Endothelial cell of umbilical vein (primary cell): ENCODE measurements at regions of chr11 and their contacts with region 1.

Region 1: DNA sequence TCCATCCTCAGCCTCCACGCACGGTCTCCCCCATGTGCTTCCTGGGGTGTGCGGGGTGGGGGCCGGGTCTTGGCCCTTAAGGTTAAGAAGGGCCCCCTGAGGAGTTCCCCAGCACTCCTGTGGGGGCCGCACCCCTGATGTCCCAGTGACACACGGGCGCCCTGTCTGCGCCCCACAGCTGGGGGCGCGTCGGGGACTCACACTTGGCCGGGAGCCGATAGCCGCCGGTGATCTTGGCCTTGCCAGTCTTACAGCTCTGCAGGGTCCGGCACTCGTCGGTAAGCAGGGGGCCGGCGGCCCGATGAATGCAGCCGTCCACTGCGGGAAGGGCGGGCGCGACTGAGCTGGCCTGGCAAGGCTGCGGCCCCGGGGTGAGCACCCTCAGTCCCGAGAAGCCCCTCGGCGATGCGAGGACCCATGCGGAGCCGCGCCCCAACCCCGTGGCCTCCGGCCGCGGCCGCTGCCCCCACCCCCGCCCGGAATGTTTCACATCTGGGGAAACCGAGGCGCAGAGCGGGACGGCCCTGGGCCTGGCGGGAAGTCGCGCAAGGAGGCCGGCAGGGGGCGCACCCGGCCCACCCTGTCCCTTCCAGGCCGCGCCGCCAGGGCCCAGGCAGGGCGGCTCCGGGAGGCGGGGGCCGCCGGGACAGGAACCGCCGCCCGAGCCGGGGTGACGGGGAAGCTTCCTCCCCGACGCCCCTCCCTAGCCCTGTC is 13.9 kb downstream of the OTUB1 start:
- DNase-seq: peak; percentile 53
- H3K4me3 ChIP-seq: peak overlapping the region in 1 of 3 experiments; percentile 13
- H3K27ac ChIP-seq: no peak overlapping the region
- H3K4me1 ChIP-seq: peaks cover 34% of the 10 kb centered on the region
- H3K27me3 ChIP-seq: no peaks in the 10 kb centered on the region
- CTCF ChIP-seq: peak; percentile 68 to 70
- POLR2A ChIP-seq: no peak

Region 2: DNA sequence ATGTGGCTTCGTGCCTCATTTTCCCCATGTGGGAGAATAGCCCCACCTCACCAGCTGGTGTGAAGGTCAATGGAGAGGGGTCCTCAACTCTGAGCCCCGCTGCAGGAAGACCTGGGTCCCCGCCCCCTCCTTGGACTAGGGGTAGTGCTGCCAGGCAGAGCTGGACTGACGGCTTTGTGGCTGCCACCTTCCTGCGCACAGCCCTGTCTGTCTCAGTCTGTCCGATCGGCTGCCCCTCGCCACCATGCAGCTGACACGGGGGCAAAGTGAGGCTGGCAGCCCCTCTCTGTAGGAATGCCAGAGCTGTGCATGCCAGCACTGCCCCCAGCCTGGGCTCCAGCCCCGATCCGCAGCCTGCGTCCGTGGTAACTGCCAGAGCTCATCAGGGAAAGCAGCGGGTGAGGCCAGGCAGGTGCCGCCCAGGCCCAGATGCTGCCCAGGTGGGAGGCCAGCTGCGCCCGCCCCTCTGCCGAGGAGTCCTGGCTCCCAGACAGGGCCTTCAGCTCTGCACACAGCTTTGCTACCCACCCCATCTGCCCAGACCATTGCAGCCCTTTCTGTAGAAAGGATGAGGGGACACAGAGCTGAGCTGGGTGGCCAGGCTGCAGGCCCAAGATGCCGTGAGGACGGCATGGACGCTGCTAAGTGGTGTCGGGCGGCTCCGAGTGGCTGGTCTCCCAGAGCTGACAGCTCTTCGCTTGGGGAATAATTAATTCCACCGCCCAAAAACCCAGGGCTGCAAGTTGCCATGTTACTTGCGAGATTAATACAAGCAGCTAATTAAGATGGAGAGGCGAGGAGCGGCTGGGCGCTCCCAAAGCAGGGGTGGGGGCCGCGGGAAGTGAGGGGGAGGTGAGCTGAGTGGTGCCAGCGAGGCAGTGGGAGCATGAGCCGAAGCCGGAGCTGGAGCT is 16.0 kb after region 1 on chr11:
- CTCF ChIA-PET with region 1: interaction called, 10 read pairs
- POLR2A ChIA-PET with region 1: no interaction called
- dilution Hi-C with region 1: no loop called
- intact Hi-C with region 1: no loop called
- DNase-seq: no peak
- H3K4me3 ChIP-seq: no peak overlapping the region
- H3K27ac ChIP-seq: no peak overlapping the region
- H3K4me1 ChIP-seq: no peaks in the 10 kb centered on the region
- H3K27me3 ChIP-seq: no peaks in the 10 kb centered on the region
- CTCF ChIP-seq: no peak
- POLR2A ChIP-seq: no peak

Region 3: DNA sequence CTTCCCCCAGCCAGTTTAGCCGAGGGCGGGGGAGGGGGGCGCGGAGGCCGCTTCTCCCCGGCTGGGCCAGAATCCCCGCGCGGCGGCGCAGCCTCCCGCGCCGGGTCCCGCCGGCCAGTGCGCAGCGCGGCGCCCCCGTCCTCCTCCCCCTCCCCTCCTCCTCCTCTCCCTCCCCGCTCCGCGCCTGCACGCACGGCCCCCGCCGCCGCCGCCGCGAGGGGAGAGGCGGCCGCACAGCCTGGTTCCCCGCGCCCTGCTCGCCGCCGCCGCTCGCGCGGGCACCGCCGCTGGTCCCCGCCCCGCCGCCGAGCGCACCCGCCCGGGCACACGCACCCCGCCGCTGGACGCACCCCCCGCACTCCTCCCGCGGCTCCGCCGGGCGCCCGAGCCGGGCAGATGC is 35.4 kb after region 1 on chr11 and contains the start of gene FLRT1:
- CTCF ChIA-PET with region 1: interaction called, 23 read pairs
- POLR2A ChIA-PET with region 1: no interaction called
- dilution Hi-C with region 1: no loop called
- intact Hi-C with region 1: no loop called
- DNase-seq: no peak
- H3K4me3 ChIP-seq: peak within 1 kb of the TSS in 1 of 3 experiments; percentile 5
- H3K27ac ChIP-seq: no peak within 1 kb of the TSS
- H3K4me1 ChIP-seq: no peaks in the 10 kb centered on the region
- H3K27me3 ChIP-seq: peaks cover 27 to 37% of the 10 kb centered on the region in 2 experiments
- CTCF ChIP-seq: no peak
- POLR2A ChIP-seq: no peak
- total RNA-seq, gene FLRT1: not detected in 2 replicates

Region 4: DNA sequence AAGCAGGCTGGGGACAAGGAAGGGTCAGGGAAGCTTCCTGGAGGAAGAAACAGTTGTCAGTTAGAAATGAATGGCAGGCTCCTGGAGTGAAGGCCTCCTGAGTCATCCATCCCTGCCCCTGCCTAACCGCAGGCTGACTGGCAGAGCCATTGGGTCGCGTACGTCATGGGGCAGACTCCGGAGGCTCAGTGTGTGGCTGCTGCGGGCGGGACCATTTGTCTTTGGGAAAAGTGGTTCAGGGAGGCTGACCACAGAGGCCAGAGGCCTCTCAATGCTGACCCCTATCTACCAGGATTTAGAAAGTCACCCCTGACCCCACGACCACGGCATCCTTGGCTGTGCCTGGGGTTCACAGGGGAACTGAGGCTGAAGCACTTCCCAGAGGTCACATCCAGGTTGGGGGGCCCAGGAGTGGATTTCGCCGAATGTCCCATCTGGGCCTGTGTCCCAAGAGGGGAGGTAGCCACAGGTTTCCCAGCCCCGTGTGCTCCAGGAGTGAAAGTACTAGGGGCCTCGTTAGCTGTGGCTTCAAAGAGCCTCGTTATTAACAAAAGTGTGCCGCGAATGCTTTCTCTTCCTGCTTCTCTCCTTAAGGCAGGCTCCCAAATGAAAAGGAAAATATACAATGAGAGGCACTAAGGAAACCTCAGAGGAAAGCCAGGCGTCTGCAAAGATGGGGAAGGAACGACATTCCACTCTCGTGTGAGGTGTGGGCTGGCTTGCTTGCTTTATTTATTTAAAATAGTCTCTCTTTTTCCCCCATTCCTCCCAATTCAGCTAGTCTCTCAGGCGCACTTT is 94.5 kb after region 1 on chr11:
- CTCF ChIA-PET with region 1: interaction called, 18 read pairs
- POLR2A ChIA-PET with region 1: no interaction called
- dilution Hi-C with region 1: no loop called
- intact Hi-C with region 1: no loop called
- DNase-seq: peak; percentile 25
- H3K4me3 ChIP-seq: no peak overlapping the region
- H3K27ac ChIP-seq: peak overlapping the region; percentile 47
- H3K4me1 ChIP-seq: peaks cover 15% of the 10 kb centered on the region
- H3K27me3 ChIP-seq: no peaks in the 10 kb centered on the region
- CTCF ChIP-seq: no peak
- POLR2A ChIP-seq: no peak

Region 5: DNA sequence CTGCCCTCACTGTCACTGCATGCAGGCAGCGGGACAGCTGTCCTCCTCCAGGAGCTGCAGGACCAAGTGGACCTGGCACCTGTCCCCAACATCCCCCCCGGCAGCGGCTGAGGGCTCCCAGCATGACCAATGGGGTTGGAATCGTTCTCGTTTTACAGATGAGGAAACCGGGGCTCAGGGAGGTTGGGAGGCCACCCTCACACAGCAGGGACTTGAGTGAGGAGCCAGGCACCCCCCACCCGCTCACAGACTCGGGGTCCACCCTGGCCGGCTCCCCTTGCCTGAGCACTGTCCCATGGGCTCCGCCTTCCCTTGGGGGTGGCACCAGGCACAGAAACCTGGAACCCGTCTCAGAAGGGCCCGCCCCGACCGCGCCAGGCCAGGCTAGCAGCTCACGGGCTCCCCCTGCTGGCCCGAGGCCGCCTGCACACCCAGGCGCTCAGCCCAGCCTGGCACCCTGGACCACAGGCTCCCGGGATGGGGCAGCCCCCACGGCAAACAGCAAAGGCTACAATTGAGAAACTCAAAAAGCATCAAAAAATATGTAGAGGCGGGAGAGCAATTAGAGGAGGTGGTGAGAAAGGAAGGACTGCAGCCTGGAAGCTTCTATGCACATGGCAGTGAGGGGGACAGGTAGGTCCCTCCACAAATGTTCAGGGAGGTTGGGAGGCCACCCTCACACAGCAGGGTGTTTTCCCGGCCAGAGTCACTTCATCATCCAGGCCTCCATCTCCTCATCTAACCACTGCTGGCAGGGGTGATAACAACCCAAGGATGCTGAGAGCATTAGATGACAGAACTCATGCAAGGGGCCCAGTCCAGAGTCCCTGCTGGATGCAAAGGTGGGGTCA is 152.9 kb after region 1 on chr11:
- CTCF ChIA-PET with region 1: interaction called, 162 read pairs
- POLR2A ChIA-PET with region 1: no interaction called
- dilution Hi-C with region 1: no loop called
- intact Hi-C with region 1: loop called (anchors 1 kb)
- DNase-seq: peak; percentile 42
- H3K4me3 ChIP-seq: no peak overlapping the region
- H3K27ac ChIP-seq: no peak overlapping the region
- H3K4me1 ChIP-seq: no peaks in the 10 kb centered on the region
- H3K27me3 ChIP-seq: no peaks in the 10 kb centered on the region
- CTCF ChIP-seq: peak; percentile 99 to 100
- POLR2A ChIP-seq: no peak

Region 6: DNA sequence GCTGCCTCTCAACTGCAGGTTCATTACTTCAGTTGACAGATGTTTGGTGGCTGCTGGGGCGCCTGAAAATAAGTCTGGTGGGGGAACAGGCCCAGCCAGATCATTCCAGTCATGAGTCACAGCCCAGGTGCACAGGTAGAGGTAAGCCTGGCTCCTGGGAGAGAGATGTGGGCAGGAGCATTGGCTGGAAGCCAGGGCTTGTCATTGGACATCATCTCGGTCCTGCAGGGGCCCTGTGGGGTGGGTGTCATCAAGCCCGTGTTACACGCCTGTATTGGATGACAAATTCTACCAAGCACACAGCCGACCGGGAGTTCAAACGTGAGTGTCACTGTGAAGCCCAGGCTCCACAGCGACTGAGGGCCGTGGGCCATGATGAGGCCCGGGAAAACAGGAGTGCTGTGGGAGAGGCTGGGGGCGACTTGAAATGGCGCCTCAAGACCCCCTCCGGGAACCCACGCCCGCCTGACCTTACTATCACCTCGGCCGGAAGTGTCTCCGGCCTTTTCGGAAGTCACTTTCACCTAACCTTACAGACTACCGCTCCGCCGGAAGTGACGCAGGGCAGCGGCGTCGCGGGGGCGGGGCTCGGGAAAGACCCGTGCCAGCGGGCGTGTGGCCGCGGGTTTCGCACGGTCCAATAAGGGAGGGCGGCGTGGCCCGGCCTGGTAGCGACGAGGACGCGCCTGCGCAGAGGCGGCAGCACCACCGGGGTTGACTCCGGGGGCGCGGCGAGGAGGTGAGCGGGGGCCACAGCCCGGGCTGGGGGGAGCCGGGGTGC is 240.4 kb after region 1 on chr11 and contains the start of gene FKBP2:
- CTCF ChIA-PET with region 1: no interaction called
- POLR2A ChIA-PET with region 1: no interaction called
- dilution Hi-C with region 1: no loop called
- intact Hi-C with region 1: loop called (anchors 2 kb)
- DNase-seq: peak; percentile 97
- H3K4me3 ChIP-seq: peak within 1 kb of the TSS; percentile 67 to 93 (median 67)
- H3K27ac ChIP-seq: peak within 1 kb of the TSS; percentile 88
- H3K4me1 ChIP-seq: peaks cover 15% of the 10 kb centered on the region
- H3K27me3 ChIP-seq: no peaks in the 10 kb centered on the region
- CTCF ChIP-seq: no peak
- POLR2A ChIP-seq: peak; percentile 1
- total RNA-seq, gene FKBP2: 48.4 and 48.5 TPM in 2 replicates